ENCODE measurements at regions of chr17 and their contacts with region 1.

Region 1: GRCh38 chr17:71407981-71408380 is 712.8 kb upstream of the SOX9 start:
- DNase-seq: no peak
- ATAC-seq: no peak
- H3K4me3 ChIP-seq: no peak overlapping the region
- H3K27ac ChIP-seq: no peak overlapping the region
- H3K4me1 ChIP-seq: no peaks in the 10 kb centered on the region
- H3K27me3 ChIP-seq: no peaks in the 10 kb centered on the region
- CTCF ChIP-seq: no peak

Region 2: DNA sequence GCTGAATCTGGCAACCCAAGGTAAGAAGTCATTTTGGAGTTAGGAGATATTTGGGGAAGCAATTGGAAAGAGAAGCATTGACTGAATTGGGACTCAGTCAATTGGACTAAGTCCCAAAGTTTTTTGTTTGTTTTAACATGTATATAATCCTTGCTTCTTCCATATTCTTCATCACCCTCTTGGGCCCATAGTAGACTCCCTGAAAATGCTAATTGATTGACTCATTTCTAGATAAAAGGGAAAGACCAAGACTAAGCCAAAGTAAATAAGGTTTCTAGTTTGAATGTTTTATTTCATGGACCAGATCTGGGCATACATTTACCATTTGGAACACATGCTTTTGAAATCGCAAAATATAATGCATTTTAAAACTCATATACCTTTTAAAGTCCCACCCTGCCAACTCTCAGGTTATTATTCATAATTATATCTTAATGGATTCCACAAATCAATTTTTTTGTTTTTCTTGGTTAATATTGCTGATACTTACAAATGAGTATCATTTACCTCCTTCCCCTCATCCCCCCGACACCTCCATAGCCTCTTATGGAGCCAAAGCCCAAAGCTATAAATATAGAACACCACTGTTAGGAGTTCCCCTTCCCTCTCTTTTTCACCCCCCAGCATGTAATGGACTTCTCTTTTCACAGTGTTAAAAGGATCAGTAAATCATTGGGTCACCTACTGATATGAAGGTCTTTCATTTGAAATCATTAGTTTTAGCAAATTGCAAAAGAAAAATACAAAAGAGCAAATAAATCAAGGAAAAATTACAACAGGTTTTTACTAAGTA is 38.9 kb after region 1 on chr17:
- intact Hi-C with region 1: loop called (anchors 2 kb)
- DNase-seq: no peak
- ATAC-seq: no peak
- H3K4me3 ChIP-seq: no peak overlapping the region
- H3K27ac ChIP-seq: no peak overlapping the region
- H3K4me1 ChIP-seq: no peaks in the 10 kb centered on the region
- H3K27me3 ChIP-seq: no peaks in the 10 kb centered on the region
- CTCF ChIP-seq: no peak

Measured in lower lobe of right lung (tissue), 2 donors.